ENCODE measurements at regions of chr9 and their contacts with region 1.

Region 1: DNA sequence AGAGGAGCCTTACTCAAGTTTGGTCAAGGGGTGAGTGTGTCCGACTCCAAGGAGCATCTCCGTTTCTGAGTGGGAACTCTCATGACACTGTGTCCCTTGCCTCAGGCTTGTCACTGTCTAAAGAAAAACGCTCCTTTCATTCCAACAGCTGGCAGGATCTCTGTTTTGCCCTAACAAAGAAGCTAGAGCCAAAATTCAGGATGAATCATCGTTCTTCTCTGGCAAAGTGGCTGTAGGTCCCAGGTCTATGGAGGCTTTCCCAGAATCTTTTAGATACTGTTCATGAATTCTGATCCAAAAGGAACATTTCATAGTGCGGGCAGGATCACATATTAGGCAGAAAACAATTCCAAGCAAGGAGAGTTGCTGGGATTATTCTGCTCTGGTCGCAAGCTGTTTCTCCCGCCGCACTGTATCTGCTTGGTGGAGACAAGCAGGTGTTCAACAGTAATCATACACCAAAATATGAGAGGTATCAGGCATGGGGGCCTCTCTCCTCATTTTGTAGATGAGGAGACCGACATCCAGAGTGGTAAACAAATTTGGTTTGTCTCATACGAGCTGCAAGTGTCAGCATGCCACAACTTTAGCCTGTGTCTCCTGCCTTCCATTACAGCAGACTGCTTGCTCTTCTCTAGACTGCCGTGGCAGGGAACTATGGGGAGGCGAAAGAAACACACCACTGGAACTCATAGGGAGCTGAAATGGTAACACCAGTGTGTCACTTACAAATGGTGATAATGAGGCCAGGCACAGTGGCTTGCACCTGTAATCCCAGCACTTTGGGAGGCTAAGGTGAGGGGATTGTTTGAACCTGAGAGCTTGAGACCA is 72.6 kb downstream of the ENTREP1 start:
- DNase-seq: no peak
- H3K4me3 ChIP-seq: peak overlapping the region in 1 of 2 donors; percentile 34
- H3K27ac ChIP-seq: peak overlapping the region; percentile 19 to 26
- H3K4me1 ChIP-seq: peaks cover 0 to 8% of the 10 kb centered on the region in 2 donors
- H3K27me3 ChIP-seq: no peaks in the 10 kb centered on the region
- CTCF ChIP-seq: no peak

Region 2: GRCh38 chr9:69044240-69045219 is 353.1 kb before region 1 on chr9:
- intact Hi-C with region 1: loop called (anchors 10 kb)
- DNase-seq: no peak
- H3K4me3 ChIP-seq: no peak overlapping the region
- H3K27ac ChIP-seq: no peak overlapping the region
- H3K4me1 ChIP-seq: peaks cover 8 to 9% of the 10 kb centered on the region in 2 donors
- H3K27me3 ChIP-seq: no peaks in the 10 kb centered on the region
- CTCF ChIP-seq: no peak

Region 3: DNA sequence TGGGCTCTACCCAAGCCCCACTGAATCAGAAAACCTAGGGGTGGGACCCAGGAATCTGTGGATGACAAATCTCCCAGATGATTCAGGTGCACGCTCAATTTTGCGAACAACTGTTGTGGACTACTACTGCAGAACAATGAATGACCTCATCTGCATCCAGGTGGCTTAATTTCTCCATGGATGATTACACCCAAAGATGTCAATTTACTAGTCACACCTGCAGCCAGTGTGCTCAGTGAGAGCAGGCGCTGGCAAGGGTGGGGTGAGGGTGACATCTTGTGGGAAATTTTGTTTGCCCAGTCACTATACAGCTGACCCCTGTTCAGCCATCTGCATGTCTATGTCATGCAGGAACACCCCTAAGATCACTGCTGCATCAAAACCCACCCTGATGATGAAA is 45.6 kb after region 1 on chr9:
- intact Hi-C with region 1: loop called (anchors 2 kb)
- DNase-seq: no peak
- H3K4me3 ChIP-seq: no peak overlapping the region
- H3K27ac ChIP-seq: no peak overlapping the region
- H3K4me1 ChIP-seq: no peaks in the 10 kb centered on the region
- H3K27me3 ChIP-seq: no peaks in the 10 kb centered on the region
- CTCF ChIP-seq: no peak

Measured in ascending aorta (tissue), 2 donors.